ENCODE measurements at regions of chr19 and their contacts with region 1.

Region 1: GRCh38 chr19:57934820-57935665 is at the start of gene ZNF418:
- DNase-seq: peak; percentile 71
- ATAC-seq: peak; percentile 99
- H3K4me3 Mint-ChIP-seq: peak within 1 kb of the TSS; percentile 100
- H3K27ac Mint-ChIP-seq: peak within 1 kb of the TSS; percentile 98
- H3K4me1 Mint-ChIP-seq: peaks cover 14% of the 10 kb centered on the region
- H3K27me3 Mint-ChIP-seq: no peaks in the 10 kb centered on the region
- CTCF ChIP-seq: no peak
- total RNA-seq, gene ZNF418: 19.6 to 21.1 TPM (median 20.8 TPM) in 3 replicates

Region 2: DNA sequence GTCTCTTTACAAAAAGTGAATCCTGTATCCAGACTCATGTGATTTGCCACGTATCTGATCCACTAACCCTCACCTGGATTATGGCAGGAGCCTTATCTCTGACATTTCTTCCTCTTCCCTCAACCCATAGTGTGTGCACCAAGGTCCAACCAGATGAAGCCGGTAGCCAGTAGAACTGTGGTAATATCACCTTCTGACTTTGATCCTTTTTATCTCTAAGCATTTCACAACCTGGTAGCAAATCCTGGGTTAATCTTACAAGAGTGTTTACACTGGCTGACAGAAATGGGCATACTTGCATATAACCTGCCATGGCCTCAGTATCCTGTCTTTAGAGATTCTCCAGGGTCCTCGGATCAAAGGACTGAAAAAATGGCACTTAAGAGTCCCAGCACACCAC is 20.5 kb before region 1 on chr19:
- CTCF ChIA-PET with region 1: interaction called, 3 read pairs
- POLR2A ChIA-PET with region 1: interaction called, 10 read pairs
- DNase-seq: no peak
- ATAC-seq: no peak
- H3K4me3 Mint-ChIP-seq: peak overlapping the region; percentile 93
- H3K27ac Mint-ChIP-seq: no peak overlapping the region
- H3K4me1 Mint-ChIP-seq: peaks cover 15% of the 10 kb centered on the region
- H3K27me3 Mint-ChIP-seq: no peaks in the 10 kb centered on the region
- CTCF ChIP-seq: no peak

Region 3: GRCh38 chr19:58002384-58003173 is 67.5 kb after region 1 on chr19 and contains the start of gene ZNF606:
- CTCF ChIA-PET with region 1: interaction called, 3 read pairs
- POLR2A ChIA-PET with region 1: interaction called, 13 read pairs
- DNase-seq: peak; percentile 86
- ATAC-seq: peak; percentile 90
- H3K4me3 Mint-ChIP-seq: peak within 1 kb of the TSS; percentile 95
- H3K27ac Mint-ChIP-seq: peak within 1 kb of the TSS; percentile 91
- H3K4me1 Mint-ChIP-seq: peaks cover 22% of the 10 kb centered on the region
- H3K27me3 Mint-ChIP-seq: no peaks in the 10 kb centered on the region
- CTCF ChIP-seq: no peak
- total RNA-seq, gene ZNF606: 24.5 to 26.2 TPM (median 26.1 TPM) in 3 replicates